OCI-LY7 (cell line): ENCODE measurements at regions of chr6 and their contacts with region 1.

Region 1: DNA sequence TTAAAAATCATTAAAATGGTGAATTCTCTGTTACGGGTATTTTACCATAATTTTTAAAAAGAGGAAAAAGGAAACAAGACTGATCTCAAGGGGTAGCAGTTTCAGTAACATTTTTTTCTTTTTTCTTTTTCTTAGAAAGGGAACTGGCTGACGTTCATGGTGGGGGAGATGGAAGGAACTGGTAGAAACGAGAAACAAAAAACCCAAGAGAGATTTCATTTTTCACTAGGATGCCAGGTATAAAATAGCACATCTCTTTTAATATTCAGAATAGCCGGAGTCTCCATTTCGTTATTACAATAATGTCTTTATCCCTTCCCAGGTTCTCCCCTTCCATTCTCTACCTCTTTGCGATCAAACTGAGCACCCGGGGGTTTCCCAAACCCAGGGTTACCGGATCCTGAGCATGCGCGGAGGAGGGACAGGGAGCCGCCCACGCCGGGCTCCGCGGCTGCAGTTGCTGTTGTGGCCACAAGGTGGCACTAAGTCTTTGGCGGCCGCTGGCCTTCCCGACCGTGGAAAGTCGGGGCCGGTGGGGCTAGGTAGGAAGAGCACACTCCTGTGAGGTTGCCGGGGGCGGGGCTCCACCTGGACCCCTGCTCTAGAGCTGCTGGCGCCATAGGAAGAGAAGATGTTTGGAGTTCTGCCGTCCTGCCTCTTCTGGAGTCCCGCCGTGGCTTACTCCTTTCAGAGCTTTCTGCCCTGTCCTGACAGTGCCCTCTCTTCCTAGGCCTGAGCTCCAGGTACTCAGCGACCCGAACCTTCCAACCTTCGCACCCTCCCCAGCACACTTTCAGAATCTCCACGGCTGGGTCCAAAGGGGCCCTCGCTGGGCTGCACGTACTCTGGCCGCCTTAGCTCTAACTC is 146.8 kb downstream of the SH3BGRL2 start:
- DNase-seq: peak; percentile 66
- H3K4me3 ChIP-seq: peak overlapping the region; percentile 43
- H3K27ac ChIP-seq: no peak overlapping the region
- H3K4me1 ChIP-seq: no peaks in the 10 kb centered on the region
- CTCF ChIP-seq: peak; percentile 90

Region 2: GRCh38 chr6:79353226-79353625 is 424.7 kb before region 1 on chr6:
- CTCF ChIA-PET with region 1: no interaction called
- POLR2A ChIA-PET with region 1: no interaction called
- intact Hi-C with region 1: no loop called
- DNase-seq: no peak
- H3K4me3 ChIP-seq: no peak overlapping the region
- H3K27ac ChIP-seq: no peak overlapping the region
- H3K4me1 ChIP-seq: no peaks in the 10 kb centered on the region
- CTCF ChIP-seq: no peak

Region 3: DNA sequence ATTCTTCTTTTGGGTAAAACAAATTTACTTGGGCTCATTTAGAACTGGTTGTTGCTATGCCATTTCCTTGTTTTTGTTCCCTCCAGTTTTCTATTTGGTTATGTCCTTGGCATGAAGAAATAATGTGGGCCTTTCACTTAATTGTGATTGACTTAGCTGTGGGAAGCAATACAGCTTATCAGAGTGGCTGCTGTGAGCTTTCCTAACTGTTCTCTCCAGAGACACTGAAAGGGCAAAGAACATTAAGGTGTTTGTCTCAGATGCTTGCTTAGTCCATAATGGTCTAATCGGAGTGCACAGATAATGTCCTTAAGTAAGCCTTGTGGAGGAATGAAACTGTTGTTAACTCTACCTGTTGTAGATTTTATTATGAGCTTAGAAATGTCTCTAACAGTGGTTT is 90.2 kb before region 1 on chr6:
- CTCF ChIA-PET with region 1: no interaction called
- POLR2A ChIA-PET with region 1: no interaction called
- intact Hi-C with region 1: no loop called
- DNase-seq: no peak
- H3K4me3 ChIP-seq: no peak overlapping the region
- H3K27ac ChIP-seq: no peak overlapping the region
- H3K4me1 ChIP-seq: no peaks in the 10 kb centered on the region
- CTCF ChIP-seq: no peak

Region 4: GRCh38 chr6:79737172-79737571 is 40.8 kb before region 1 on chr6:
- CTCF ChIA-PET with region 1: no interaction called
- POLR2A ChIA-PET with region 1: no interaction called
- intact Hi-C with region 1: no loop called
- DNase-seq: no peak
- H3K4me3 ChIP-seq: no peak overlapping the region
- H3K27ac ChIP-seq: no peak overlapping the region
- H3K4me1 ChIP-seq: no peaks in the 10 kb centered on the region
- CTCF ChIP-seq: no peak

Region 5: DNA sequence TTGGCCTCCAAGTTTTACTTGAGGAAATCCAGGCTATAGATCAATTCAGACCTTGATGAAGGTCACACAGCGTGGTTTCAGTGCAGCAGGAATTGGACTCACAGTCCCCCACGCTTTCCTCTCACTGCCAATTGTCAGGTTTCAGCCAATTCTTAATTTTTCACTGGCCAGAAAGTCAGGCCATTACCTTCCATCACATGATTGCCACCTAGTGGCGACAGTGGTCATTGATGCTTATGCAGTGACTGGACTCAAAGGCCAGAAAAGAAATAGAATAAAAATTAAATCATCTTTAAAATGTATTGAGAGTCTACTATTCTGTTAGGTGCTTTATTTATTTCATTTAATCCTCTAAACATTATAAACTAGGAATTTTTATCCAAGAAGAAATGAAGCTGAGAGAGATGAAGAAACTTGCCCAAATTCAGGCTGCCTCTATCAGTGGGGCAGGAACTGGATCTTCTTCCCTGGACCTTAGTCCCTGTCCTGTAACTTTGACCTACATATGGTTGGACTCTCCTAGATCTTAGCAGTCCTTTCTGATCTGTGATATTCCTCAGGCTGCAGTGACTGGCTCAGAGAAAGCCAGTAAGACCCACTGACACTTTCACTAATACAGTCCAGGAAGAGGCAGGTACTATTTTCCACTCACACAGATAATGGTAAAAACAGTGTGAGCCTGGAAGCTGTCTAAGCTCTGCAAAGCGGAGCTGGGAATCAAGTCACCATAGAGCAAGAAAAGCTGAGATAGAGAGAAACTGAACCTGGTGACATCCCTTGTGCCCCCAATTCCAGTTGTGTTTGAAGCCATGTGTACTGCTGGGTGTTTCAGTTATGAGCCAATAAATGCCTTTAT is 36.1 kb after region 1 on chr6:
- CTCF ChIA-PET with region 1: no interaction called
- POLR2A ChIA-PET with region 1: no interaction called
- intact Hi-C with region 1: loop called (anchors 5 kb)
- DNase-seq: peak; percentile 60
- H3K4me3 ChIP-seq: no peak overlapping the region
- H3K27ac ChIP-seq: no peak overlapping the region
- H3K4me1 ChIP-seq: no peaks in the 10 kb centered on the region
- CTCF ChIP-seq: peak; percentile 90

Region 6: GRCh38 chr6:79869600-79870084 is 91.7 kb after region 1 on chr6:
- CTCF ChIA-PET with region 1: no interaction called
- POLR2A ChIA-PET with region 1: no interaction called
- intact Hi-C with region 1: loop called (anchors 2 kb)
- DNase-seq: peak; percentile 87
- H3K4me3 ChIP-seq: no peak overlapping the region
- H3K27ac ChIP-seq: no peak overlapping the region
- H3K4me1 ChIP-seq: no peaks in the 10 kb centered on the region
- CTCF ChIP-seq: peak; percentile 85

Region 7: DNA sequence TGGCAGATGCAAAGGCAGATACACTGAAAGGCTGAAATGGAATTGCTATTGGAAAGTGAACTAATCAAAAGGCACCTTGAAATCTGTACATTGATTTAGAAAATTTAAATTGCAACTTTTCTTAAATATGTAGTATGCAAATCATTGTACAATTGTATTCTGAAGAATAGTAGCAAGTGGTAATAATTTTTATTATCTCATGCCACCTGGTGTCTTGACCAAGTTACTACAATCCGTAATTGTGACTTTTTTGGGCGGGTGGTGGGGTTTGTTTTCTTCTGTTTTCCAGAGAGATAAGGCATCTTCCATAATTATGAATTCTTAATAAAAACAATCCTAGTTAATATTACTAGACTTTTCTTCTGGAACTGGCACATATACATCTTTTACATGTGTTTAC is 316.1 kb after region 1 on chr6:
- CTCF ChIA-PET with region 1: no interaction called
- POLR2A ChIA-PET with region 1: no interaction called
- intact Hi-C with region 1: loop called (anchors 2 kb)
- DNase-seq: peak; percentile 45
- H3K4me3 ChIP-seq: no peak overlapping the region
- H3K27ac ChIP-seq: no peak overlapping the region
- H3K4me1 ChIP-seq: peaks cover 4% of the 10 kb centered on the region
- CTCF ChIP-seq: peak; percentile 85